ENCODE measurements at regions of chr22 and their contacts with region 1.

Region 1: GRCh38 chr22:20674998-20675397 is 98.9 kb upstream of the SERPIND1 start:
- DNase-seq: no peak
- ATAC-seq: no peak
- H3K4me3 ChIP-seq: no peak overlapping the region
- H3K27ac ChIP-seq: no peak overlapping the region
- H3K4me1 ChIP-seq: no peaks in the 10 kb centered on the region
- H3K27me3 ChIP-seq: peaks cover 0 to 6% (median 5%) of the 10 kb centered on the region in 3 donors
- CTCF ChIP-seq: no peak
- POLR2A ChIP-seq: no peak

Region 2: GRCh38 chr22:20430720-20431510 is 244.1 kb before region 1 on chr22:
- in situ Hi-C with region 1: loop called in 1 of 4 experiments (anchors 25 kb)
- intact Hi-C with region 1: no loop called
- DNase-seq: peak in 1 of 2 donors; percentile 34
- ATAC-seq: peak; percentile 59 to 77
- H3K4me3 ChIP-seq: peak overlapping the region; percentile 25 to 50 (median 37)
- H3K27ac ChIP-seq: no peak overlapping the region
- H3K4me1 ChIP-seq: peaks cover 0 to 6% of the 10 kb centered on the region in 2 donors
- H3K27me3 ChIP-seq: peaks cover 6 to 13% (median 12%) of the 10 kb centered on the region in 3 donors
- CTCF ChIP-seq: peak; percentile 19 to 61 (median 47)
- POLR2A ChIP-seq: no peak

Region 3: DNA sequence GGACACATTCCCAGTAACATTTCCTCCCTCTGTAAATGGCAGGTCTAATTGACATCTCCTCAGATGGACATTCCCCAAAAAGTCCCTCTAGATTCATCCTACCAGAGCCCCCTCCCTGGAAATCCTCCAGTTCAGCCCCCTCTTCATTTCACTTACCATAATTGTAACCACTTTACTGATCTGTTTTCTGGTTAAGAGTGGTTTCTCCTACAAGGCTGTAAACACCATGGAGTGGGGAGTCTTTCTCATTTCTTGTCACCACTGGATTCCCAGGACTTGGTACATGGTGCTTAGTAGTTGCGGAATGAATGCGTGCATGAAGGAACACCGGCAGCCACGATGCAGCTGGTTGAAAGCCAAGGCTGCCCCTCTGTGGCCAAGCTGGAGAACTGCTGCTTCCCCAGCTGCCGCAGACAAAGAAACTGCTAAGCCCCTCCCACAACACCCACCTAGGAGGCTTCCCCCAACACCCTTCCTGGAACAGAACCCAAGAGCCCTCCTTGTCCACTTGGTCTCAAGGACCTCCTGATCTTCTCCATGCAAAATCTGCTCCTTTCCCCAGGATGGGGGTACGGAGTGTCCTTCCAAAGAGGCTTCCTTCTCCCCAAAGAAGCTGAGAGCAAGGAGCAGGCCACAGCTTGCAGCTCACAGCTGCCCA is 218.8 kb before region 1 on chr22:
- in situ Hi-C with region 1: loop called in 1 of 4 experiments (anchors 25 kb)
- intact Hi-C with region 1: no loop called
- DNase-seq: peak; percentile 37 to 62
- ATAC-seq: peak; percentile 67 to 85
- H3K4me3 ChIP-seq: no peak overlapping the region
- H3K27ac ChIP-seq: no peak overlapping the region
- H3K4me1 ChIP-seq: no peaks in the 10 kb centered on the region
- H3K27me3 ChIP-seq: no peaks in the 10 kb centered on the region
- CTCF ChIP-seq: peak; percentile 52 to 82 (median 77)
- POLR2A ChIP-seq: no peak

Region 4: GRCh38 chr22:20652582-20653399 is 22.2 kb before region 1 on chr22:
- in situ Hi-C with region 1: no loop called
- intact Hi-C with region 1: no loop called
- DNase-seq: no peak
- ATAC-seq: no peak
- H3K4me3 ChIP-seq: no peak overlapping the region
- H3K27ac ChIP-seq: no peak overlapping the region
- H3K4me1 ChIP-seq: peaks cover 0 to 6% of the 10 kb centered on the region in 2 donors
- H3K27me3 ChIP-seq: no peaks in the 10 kb centered on the region
- CTCF ChIP-seq: no peak
- POLR2A ChIP-seq: no peak

Region 5: GRCh38 chr22:20957316-20958101 is 282.5 kb after region 1 on chr22:
- in situ Hi-C with region 1: no loop called
- intact Hi-C with region 1: no loop called
- DNase-seq: no peak
- ATAC-seq: peak in 1 of 2 donors; percentile 9
- H3K4me3 ChIP-seq: peak overlapping the region; percentile 58 to 77 (median 66)
- H3K27ac ChIP-seq: peak overlapping the region in 1 of 4 donors; percentile 6
- H3K4me1 ChIP-seq: peaks cover 45% of the 10 kb centered on the region in 2 donors
- H3K27me3 ChIP-seq: no peaks in the 10 kb centered on the region
- CTCF ChIP-seq: no peak
- POLR2A ChIP-seq: no peak